ENCODE measurements at regions of chr22 and their contacts with region 1.

Region 1: GRCh38 chr22:45425101-45425500 is 11.6 kb downstream of the RIBC2 start:
- DNase-seq: no peak
- H3K4me3 ChIP-seq: no peak overlapping the region
- H3K27ac ChIP-seq: peak overlapping the region in 1 of 2 donors; percentile 21
- H3K4me1 ChIP-seq: no peaks in the 10 kb centered on the region
- H3K27me3 ChIP-seq: no peaks in the 10 kb centered on the region
- CTCF ChIP-seq: no peak
- POLR2A ChIP-seq: no peak

Region 2: DNA sequence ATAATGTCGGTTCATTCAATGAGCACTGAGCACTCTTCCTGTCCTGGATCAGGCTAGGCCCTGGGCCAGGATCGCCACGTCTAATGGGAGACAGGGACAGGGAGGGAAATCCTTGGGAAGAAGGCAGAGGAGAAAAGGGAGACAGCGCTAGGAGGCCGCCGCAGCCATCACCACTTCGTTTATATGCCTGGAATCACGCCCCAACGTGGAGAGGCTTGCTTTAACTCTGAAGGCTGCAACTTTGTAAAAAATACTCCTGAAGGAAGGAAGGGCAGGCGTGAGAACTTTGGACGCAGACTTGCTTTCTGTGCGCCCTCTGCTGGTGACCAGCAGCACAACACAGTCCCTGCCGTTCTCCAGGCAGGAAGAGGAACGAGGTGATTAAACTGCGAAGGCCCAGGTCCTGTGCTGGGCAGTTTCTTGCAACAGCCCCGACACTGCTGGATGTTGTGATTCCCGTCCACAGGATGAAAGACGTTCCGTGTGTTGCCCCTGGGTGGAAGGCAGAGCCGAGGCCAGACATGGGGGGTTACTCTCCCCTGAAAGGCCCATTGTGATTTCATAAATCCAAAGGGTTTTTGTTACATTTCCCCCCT is 10.5 kb after region 1 on chr22:
- intact Hi-C with region 1: loop called (anchors 1 kb)
- DNase-seq: peak; percentile 83 to 89
- H3K4me3 ChIP-seq: peak overlapping the region in 2 of 3 donors; percentile 27 to 53
- H3K27ac ChIP-seq: peak overlapping the region; percentile 64 to 86
- H3K4me1 ChIP-seq: no peaks in the 10 kb centered on the region
- H3K27me3 ChIP-seq: no peaks in the 10 kb centered on the region
- CTCF ChIP-seq: peak; percentile 96 to 99 (median 99)
- POLR2A ChIP-seq: no peak

Region 3: DNA sequence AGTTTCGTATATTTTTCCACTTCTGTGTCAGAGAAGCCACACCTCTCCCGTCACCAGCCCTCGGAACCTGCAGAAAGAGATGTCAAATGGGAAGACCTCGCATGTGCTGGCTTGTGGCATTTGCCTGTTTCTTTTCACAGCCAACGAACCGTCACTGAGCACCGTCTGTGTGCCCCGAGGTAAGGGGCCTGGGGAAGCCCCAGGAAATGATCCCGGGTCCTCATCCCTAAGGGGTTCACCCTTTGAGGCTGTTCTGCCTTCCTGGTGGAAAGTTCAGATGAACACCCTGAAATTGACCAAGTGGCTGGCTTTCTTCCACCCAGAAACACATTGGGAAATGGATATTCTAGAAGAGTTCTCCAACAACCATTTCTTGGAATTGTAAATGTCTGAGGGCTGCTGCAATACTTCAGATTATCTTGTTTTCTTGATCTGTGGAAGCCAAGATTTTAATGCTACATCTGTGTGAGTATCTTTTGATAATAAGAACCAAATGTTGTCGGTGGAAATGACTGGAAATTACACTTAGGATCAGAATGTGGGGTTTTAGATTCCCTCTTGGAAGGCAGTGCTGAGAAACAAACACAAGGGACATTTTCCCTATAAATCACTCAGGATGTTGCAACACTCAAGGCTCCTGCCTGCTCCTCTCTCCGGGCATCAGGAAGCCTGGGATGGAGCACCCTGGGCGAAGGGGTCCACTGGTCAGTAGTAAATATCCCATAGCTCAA is 26.0 kb after region 1 on chr22:
- intact Hi-C with region 1: no loop called
- DNase-seq: no peak
- H3K4me3 ChIP-seq: no peak overlapping the region
- H3K27ac ChIP-seq: peak overlapping the region; percentile 61 to 95
- H3K4me1 ChIP-seq: peaks cover 0 to 8% of the 10 kb centered on the region in 2 donors
- H3K27me3 ChIP-seq: no peaks in the 10 kb centered on the region
- CTCF ChIP-seq: no peak
- POLR2A ChIP-seq: no peak

Region 4: GRCh38 chr22:45493286-45493771 is 68.2 kb after region 1 on chr22:
- intact Hi-C with region 1: no loop called
- DNase-seq: no peak
- H3K4me3 ChIP-seq: no peak overlapping the region
- H3K27ac ChIP-seq: peak overlapping the region; percentile 48 to 82
- H3K4me1 ChIP-seq: no peaks in the 10 kb centered on the region
- H3K27me3 ChIP-seq: no peaks in the 10 kb centered on the region
- CTCF ChIP-seq: no peak
- POLR2A ChIP-seq: no peak

Region 5: GRCh38 chr22:45534339-45535192 is 109.5 kb after region 1 on chr22:
- intact Hi-C with region 1: no loop called
- DNase-seq: no peak
- H3K4me3 ChIP-seq: no peak overlapping the region
- H3K27ac ChIP-seq: peak overlapping the region in 1 of 2 donors; percentile 66
- H3K4me1 ChIP-seq: peaks cover 0 to 9% of the 10 kb centered on the region in 2 donors
- H3K27me3 ChIP-seq: no peaks in the 10 kb centered on the region
- CTCF ChIP-seq: no peak
- POLR2A ChIP-seq: no peak